H1 (cell line): ENCODE measurements at regions of chr17 and their contacts with region 1.

Region 1: GRCh38 chr17:2054512-2055291 is at the start of gene HIC1:
- DNase-seq: peak in 1 of 2 experiments; percentile 90
- H3K4me3 ChIP-seq: peak within 1 kb of the TSS; percentile 15 to 58 (median 42)
- H3K27ac ChIP-seq: no peak within 1 kb of the TSS
- H3K4me1 ChIP-seq: peaks cover 0 to 20% (median 11%) of the 10 kb centered on the region in 4 experiments; a peak in 5 of 7 replicates
- H3K27me3 ChIP-seq: peaks cover 78 to 93% (median 91%) of the 10 kb centered on the region in 4 experiments
- CTCF ChIP-seq: peak; percentile 85 to 92 (median 87)
- EP300 ChIP-seq: 0 out of 3 replicates have a peak, but pooled peaks of 1 of the 2 experiments have one; percentile 12
- POLR2A ChIP-seq: no peak
- RAD21 ChIP-seq: peak; percentile 77 to 89
- total RNA-seq, gene HIC1: 0.09 and 0.19 TPM in 2 replicates

Region 2: DNA sequence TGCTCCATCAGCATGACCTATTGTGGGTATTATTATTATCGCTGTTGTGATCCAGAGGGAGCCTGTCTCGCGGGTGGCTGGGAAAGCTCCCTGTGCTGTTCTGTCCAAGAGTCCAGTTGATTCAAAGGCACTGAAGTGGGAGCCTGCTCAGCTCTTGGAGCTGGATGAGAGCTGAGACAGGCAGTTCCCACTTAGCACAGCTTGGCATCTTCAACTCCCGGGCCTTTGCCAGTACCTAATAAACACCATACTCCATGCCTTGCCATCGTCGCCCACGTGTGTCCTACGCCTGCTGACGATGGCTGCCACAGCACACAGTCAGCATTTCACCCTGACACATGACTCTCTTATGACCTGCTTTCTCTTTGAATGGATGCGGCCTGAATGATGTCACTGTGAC is 62.2 kb before region 1 on chr17:
- CTCF ChIA-PET with region 1: no interaction called
- POLR2A ChIA-PET with region 1: no interaction called
- DNase-seq: no peak
- H3K4me3 ChIP-seq: no peak overlapping the region
- H3K27ac ChIP-seq: no peak overlapping the region
- H3K4me1 ChIP-seq: peaks cover 0 to 14% (median 5%) of the 10 kb centered on the region in 4 experiments; a peak in 5 of 7 replicates
- H3K27me3 ChIP-seq: peaks cover 0 to 8% (median 3%) of the 10 kb centered on the region in 4 experiments; a peak in 4 of 7 replicates
- CTCF ChIP-seq: no peak
- EP300 ChIP-seq: no peak
- POLR2A ChIP-seq: no peak
- RAD21 ChIP-seq: no peak

Region 3: GRCh38 chr17:2041561-2042366 is 12.9 kb before region 1 on chr17 and contains the start of gene OVCA2:
- CTCF ChIA-PET with region 1: interaction called, 12 read pairs
- POLR2A ChIA-PET with region 1: interaction called, 3 read pairs
- DNase-seq: peak in 1 of 2 experiments; percentile 96
- H3K4me3 ChIP-seq: peak within 1 kb of the TSS; percentile 58 to 82 (median 71)
- H3K27ac ChIP-seq: peak within 1 kb of the TSS; percentile 74
- H3K4me1 ChIP-seq: peaks cover 0 to 6% (median 5%) of the 10 kb centered on the region in 4 experiments; a peak in 4 of 7 replicates
- H3K27me3 ChIP-seq: peaks cover 0 to 2% (median 0%) of the 10 kb centered on the region in 4 experiments; a peak in 1 of 7 replicates
- CTCF ChIP-seq: peak; percentile 54 to 66 (median 54)
- EP300 ChIP-seq: no peak
- POLR2A ChIP-seq: peak in 1 of 2 experiments; percentile 85; a peak in 2 of 3 replicates
- RAD21 ChIP-seq: peak; percentile 58 to 75
- total RNA-seq, gene OVCA2: 14.9 and 15.3 TPM in 2 replicates

Region 4: GRCh38 chr17:2070241-2071023 is 15.7 kb after region 1 on chr17:
- CTCF ChIA-PET with region 1: interaction called, 122 read pairs
- POLR2A ChIA-PET with region 1: interaction called, 4 read pairs
- DNase-seq: no peak
- H3K4me3 ChIP-seq: no peak overlapping the region
- H3K27ac ChIP-seq: no peak overlapping the region
- H3K4me1 ChIP-seq: peaks cover under 1 to 14% (median 5%) of the 10 kb centered on the region in 4 experiments; a peak in 6 of 7 replicates
- H3K27me3 ChIP-seq: no peaks in the 10 kb centered on the region
- CTCF ChIP-seq: peak; percentile 26 to 53 (median 44)
- EP300 ChIP-seq: no peak
- POLR2A ChIP-seq: no peak
- RAD21 ChIP-seq: peak; percentile 17 to 42; a peak in 2 of 4 replicates

Region 5: GRCh38 chr17:2094891-2095535 is 40.3 kb after region 1 on chr17:
- CTCF ChIA-PET with region 1: interaction called, 10 read pairs
- POLR2A ChIA-PET with region 1: interaction called, 3 read pairs
- DNase-seq: no peak
- H3K4me3 ChIP-seq: no peak overlapping the region
- H3K27ac ChIP-seq: peak overlapping the region; percentile 1; the same call in 1 of the 2 replicates
- H3K4me1 ChIP-seq: peaks cover 2 to 16% (median 7%) of the 10 kb centered on the region in 4 experiments
- H3K27me3 ChIP-seq: no peaks in the 10 kb centered on the region
- CTCF ChIP-seq: peak; percentile 53 to 64 (median 63)
- EP300 ChIP-seq: no peak
- POLR2A ChIP-seq: no peak
- RAD21 ChIP-seq: peak; percentile 74 to 81

Region 6: GRCh38 chr17:2128011-2128410 is 73.3 kb after region 1 on chr17:
- CTCF ChIA-PET with region 1: no interaction called
- POLR2A ChIA-PET with region 1: no interaction called
- DNase-seq: no peak
- H3K4me3 ChIP-seq: no peak overlapping the region
- H3K27ac ChIP-seq: no peak overlapping the region
- H3K4me1 ChIP-seq: peaks cover under 1 to 10% (median 5%) of the 10 kb centered on the region in 4 experiments
- H3K27me3 ChIP-seq: no peaks in the 10 kb centered on the region
- CTCF ChIP-seq: no peak
- EP300 ChIP-seq: no peak
- POLR2A ChIP-seq: no peak
- RAD21 ChIP-seq: no peak

Region 7: GRCh38 chr17:2232244-2232638 is 177.5 kb after region 1 on chr17:
- CTCF ChIA-PET with region 1: interaction called, 13 read pairs
- POLR2A ChIA-PET with region 1: no interaction called
- DNase-seq: no peak
- H3K4me3 ChIP-seq: no peak overlapping the region
- H3K27ac ChIP-seq: no peak overlapping the region
- H3K4me1 ChIP-seq: no peaks in the 10 kb centered on the region
- H3K27me3 ChIP-seq: no peaks in the 10 kb centered on the region
- CTCF ChIP-seq: no peak
- EP300 ChIP-seq: no peak
- POLR2A ChIP-seq: no peak
- RAD21 ChIP-seq: no peak